ENCODE measurements at regions of chr7 and their contacts with region 1.

Region 1: GRCh38 chr7:32479574-32480200 is 10.5 kb downstream of the LSM5 start:
- DNase-seq: peak; percentile 63
- H3K4me3 Mint-ChIP-seq: no peak overlapping the region
- H3K27ac Mint-ChIP-seq: no peak overlapping the region
- H3K4me1 Mint-ChIP-seq: peaks cover 9% of the 10 kb centered on the region
- H3K27me3 Mint-ChIP-seq: no peaks in the 10 kb centered on the region
- CTCF ChIP-seq: peak; percentile 85

Region 2: GRCh38 chr7:32347244-32347828 is 132.4 kb before region 1 on chr7:
- CTCF ChIA-PET with region 1: no interaction called
- POLR2A ChIA-PET with region 1: no interaction called
- intact Hi-C with region 1: loop called (anchors 2 kb)
- DNase-seq: peak; percentile 55
- H3K4me3 Mint-ChIP-seq: no peak overlapping the region
- H3K27ac Mint-ChIP-seq: no peak overlapping the region
- H3K4me1 Mint-ChIP-seq: no peaks in the 10 kb centered on the region
- H3K27me3 Mint-ChIP-seq: no peaks in the 10 kb centered on the region
- CTCF ChIP-seq: peak; percentile 75

Measured in MCF 10A (cell line).